Mammary epithelial cell (primary cell): ENCODE measurements at regions of chr12 and their contacts with region 1.

Region 1: GRCh38 chr12:62983599-62984022 is 48.7 kb upstream of the PPM1H start:
- DNase-seq: no peak
- H3K4me3 ChIP-seq: no peak overlapping the region
- H3K27ac ChIP-seq: no peak overlapping the region
- H3K4me1 ChIP-seq: no peaks in the 10 kb centered on the region
- H3K27me3 ChIP-seq: peaks cover 3% of the 10 kb centered on the region
- CTCF ChIP-seq: peak in 1 of 2 donors; percentile 29

Region 2: DNA sequence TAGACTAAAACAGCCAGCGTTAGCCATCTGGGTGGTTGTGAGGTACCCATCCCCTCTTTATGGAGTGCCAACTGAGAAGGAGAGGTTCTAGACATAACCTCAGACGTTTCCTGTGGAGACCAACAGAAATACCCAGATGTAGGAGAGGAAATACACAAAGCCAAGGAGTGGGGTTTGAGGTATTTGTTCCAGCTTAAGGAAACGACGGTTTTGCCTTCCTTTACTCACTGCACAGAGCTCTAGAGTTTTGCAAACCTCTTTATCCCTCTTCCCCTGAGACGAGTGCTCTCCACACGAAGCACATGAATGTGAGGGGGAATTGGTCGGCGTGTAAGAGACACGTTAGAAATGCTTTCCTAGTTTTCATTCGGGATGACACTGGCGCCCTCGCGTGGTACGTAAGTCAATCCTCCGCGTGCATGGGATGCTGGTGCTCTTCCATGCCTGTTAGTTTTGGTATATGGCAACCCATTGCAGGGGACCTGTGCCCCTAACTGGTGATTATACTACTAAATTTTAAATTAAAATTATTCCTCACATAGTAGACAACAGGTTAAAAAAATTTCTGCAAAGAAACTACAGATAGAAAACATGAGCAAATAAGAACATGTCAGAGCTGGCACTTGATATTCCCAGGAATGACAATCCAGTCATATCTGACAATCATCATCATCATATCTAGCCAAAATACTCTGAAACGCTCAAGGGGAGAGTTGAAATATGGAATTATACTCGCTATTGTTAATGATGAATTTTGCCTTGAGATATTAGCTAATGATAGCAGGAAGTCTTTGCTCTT is 170.4 kb before region 1 on chr12:
- CTCF ChIA-PET with region 1: interaction called, 3 read pairs
- dilution Hi-C with region 1: no loop called
- in situ Hi-C with region 1: no loop called
- intact Hi-C with region 1: loop called (anchors 5 kb)
- DNase-seq: peak; percentile 40
- H3K4me3 ChIP-seq: no peak overlapping the region
- H3K27ac ChIP-seq: no peak overlapping the region
- H3K4me1 ChIP-seq: peaks cover 8% of the 10 kb centered on the region
- H3K27me3 ChIP-seq: no peaks in the 10 kb centered on the region
- CTCF ChIP-seq: peak; percentile 85 to 90

Region 3: DNA sequence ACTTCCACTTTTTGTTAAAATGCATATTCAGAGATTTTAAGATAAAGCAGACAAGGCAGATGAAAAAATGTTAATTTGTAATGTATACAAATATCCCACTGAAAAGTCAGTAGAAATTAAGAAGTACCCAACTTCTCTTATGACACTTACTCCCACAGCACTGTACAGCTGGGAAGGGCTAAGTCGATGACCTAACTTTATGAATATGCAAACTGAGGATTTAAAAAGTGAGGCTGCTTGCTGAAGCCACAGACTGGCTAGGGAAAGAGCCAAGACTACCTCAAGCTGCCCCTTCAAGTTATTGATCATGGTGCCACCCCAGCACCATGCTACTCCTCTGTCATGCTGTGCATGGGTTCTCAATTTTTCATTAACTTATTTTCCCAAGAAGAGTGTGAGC is 65.7 kb before region 1 on chr12:
- CTCF ChIA-PET with region 1: no interaction called
- dilution Hi-C with region 1: no loop called
- in situ Hi-C with region 1: no loop called
- intact Hi-C with region 1: no loop called
- DNase-seq: no peak
- H3K4me3 ChIP-seq: no peak overlapping the region
- H3K27ac ChIP-seq: no peak overlapping the region
- H3K4me1 ChIP-seq: peaks cover 6% of the 10 kb centered on the region
- H3K27me3 ChIP-seq: peaks cover 11% of the 10 kb centered on the region
- CTCF ChIP-seq: no peak

Region 4: GRCh38 chr12:62928632-62929031 is 55.0 kb before region 1 on chr12:
- CTCF ChIA-PET with region 1: no interaction called
- dilution Hi-C with region 1: no loop called
- in situ Hi-C with region 1: no loop called
- intact Hi-C with region 1: no loop called
- DNase-seq: no peak
- H3K4me3 ChIP-seq: no peak overlapping the region
- H3K27ac ChIP-seq: no peak overlapping the region
- H3K4me1 ChIP-seq: peaks cover 1% of the 10 kb centered on the region
- H3K27me3 ChIP-seq: peaks cover 9% of the 10 kb centered on the region
- CTCF ChIP-seq: no peak

Region 5: DNA sequence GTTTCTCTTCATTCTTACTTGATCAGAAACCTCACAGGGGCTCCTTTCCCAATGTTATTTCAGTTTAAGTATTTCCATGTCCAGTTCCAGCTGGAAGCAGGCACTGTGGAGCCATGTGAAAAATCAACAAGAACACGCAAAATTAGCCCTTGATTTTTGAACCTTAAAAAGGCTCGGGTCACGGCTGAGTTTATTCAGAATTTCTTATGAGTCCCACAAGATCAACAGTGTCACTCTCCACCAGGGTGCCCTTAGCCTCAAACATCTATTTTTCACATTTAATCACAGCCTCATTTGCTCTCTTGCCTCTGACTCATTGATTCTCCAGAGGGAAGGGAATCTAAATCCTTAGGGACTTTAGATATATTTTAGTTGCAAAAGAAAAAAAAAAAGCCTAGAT is 325.1 kb after region 1 on chr12:
- CTCF ChIA-PET with region 1: no interaction called
- dilution Hi-C with region 1: no loop called
- in situ Hi-C with region 1: no loop called
- intact Hi-C with region 1: no loop called
- DNase-seq: no peak
- H3K4me3 ChIP-seq: no peak overlapping the region
- H3K27ac ChIP-seq: no peak overlapping the region
- H3K4me1 ChIP-seq: peaks cover 5% of the 10 kb centered on the region
- H3K27me3 ChIP-seq: no peaks in the 10 kb centered on the region
- CTCF ChIP-seq: no peak

Region 6: GRCh38 chr12:63353559-63353958 is 369.9 kb after region 1 on chr12:
- CTCF ChIA-PET with region 1: no interaction called
- dilution Hi-C with region 1: no loop called
- in situ Hi-C with region 1: no loop called
- intact Hi-C with region 1: no loop called
- DNase-seq: peak; percentile 64
- H3K4me3 ChIP-seq: no peak overlapping the region
- H3K27ac ChIP-seq: no peak overlapping the region
- H3K4me1 ChIP-seq: peaks cover 3% of the 10 kb centered on the region
- H3K27me3 ChIP-seq: peaks cover under 1% of the 10 kb centered on the region
- CTCF ChIP-seq: peak; percentile 37